A549 (cell line): ENCODE measurements at regions of chr17 and their contacts with region 1.

Region 1: DNA sequence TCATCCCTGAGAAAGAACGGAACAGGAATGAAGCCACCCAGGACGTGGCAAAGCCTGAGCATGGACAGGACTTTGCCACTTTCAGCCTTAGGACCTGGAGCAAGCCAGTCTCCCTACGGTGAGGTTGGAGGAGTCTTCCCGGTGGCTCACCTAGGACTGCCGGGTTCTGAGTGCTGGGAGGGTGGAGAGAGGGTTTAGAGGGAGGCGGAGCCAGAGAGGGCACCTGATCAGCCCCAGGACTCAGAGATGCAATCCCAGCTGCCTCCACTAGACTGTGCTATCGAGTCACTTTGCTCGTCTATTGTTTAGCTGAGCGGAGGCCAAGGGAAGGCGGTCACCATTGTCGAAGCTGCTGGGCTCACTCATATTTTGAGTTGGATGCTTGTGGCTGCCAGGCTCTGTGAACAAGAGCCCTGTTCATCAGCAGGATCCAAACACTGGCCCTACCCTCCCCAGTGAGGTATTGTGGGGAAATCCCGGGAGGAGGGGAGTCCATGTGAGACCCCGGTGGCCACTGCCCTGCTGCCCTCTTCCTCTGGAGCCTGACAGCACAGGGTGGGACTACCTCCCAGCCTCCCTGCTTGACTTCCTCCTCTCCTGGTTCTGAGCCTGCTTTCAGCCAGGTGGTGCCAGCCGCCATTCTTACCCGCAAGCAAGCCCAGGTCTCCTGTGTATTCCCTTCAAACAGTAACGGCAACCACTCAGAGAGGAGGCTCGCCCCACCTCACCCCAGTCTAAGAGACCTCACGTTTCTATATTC is 7.0 kb downstream of the KRT14 start:
- DNase-seq: peak; percentile 87 to 98
- ATAC-seq: peak; percentile 88 to 96
- H3K4me3 ChIP-seq: no peak overlapping the region; the same call in 2 of the 3 replicates
- H3K27ac ChIP-seq: peak overlapping the region; percentile 25 to 37; a peak in 3 of 6 replicates
- H3K4me1 ChIP-seq: peaks cover 6% of the 10 kb centered on the region
- CTCF ChIP-seq: peak; percentile 69
- EP300 ChIP-seq: no peak
- POLR2A ChIP-seq: no peak
- RAD21 ChIP-seq: peak; percentile 64 to 81

Region 2: GRCh38 chr17:41538565-41538991 is 41.1 kb before region 1 on chr17:
- CTCF ChIA-PET with region 1: no interaction called
- POLR2A ChIA-PET with region 1: no interaction called
- DNase-seq: no peak
- ATAC-seq: no peak
- H3K4me3 ChIP-seq: no peak overlapping the region
- H3K27ac ChIP-seq: peak overlapping the region in 1 of 2 experiments; percentile 40; a peak in 3 of 6 replicates
- H3K4me1 ChIP-seq: peaks cover 16% of the 10 kb centered on the region; the same call in 2 of the 3 replicates
- CTCF ChIP-seq: no peak
- EP300 ChIP-seq: no peak
- POLR2A ChIP-seq: no peak
- RAD21 ChIP-seq: no peak

Region 3: GRCh38 chr17:41567317-41567716 is 12.3 kb before region 1 on chr17:
- CTCF ChIA-PET with region 1: interaction called, 36 read pairs
- POLR2A ChIA-PET with region 1: no interaction called
- DNase-seq: no peak
- ATAC-seq: no peak
- H3K4me3 ChIP-seq: no peak overlapping the region
- H3K27ac ChIP-seq: no peak overlapping the region
- H3K4me1 ChIP-seq: no peaks in the 10 kb centered on the region
- CTCF ChIP-seq: no peak
- EP300 ChIP-seq: no peak
- POLR2A ChIP-seq: no peak
- RAD21 ChIP-seq: no peak

Region 4: DNA sequence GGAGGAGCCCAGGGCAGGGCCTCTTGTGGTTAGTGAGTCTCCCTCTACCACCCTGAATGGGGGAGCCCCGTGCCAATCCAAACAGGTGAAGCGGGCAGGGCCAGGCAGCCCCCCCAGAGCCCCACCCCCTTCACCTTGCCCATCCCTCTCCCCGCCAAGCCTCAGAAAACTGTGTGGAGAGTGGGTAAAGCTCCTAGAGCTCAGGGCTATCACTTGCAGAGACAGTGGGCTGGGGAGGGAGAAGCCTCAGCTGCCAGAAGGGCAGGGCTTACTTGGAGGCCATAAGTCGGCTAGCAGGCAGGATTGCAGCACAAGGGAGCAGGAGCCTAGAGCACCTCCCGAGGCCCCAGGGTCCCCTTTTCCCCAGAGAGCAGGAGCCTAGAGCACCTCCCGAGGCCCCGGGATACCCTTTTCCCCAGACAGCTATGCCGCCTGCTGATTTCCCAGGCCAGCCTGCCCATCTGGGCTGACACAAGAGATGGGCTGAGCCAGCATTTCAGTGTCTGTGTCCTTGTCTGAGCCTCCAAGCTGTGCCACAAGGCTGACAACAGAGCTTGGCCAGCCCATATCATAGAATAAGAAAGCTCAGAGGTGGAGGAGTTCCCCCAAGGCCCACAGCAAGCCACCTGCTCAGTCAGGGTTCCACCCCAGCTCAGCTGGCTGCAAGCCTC is 13.8 kb after region 1 on chr17:
- CTCF ChIA-PET with region 1: interaction called, 10 read pairs
- POLR2A ChIA-PET with region 1: no interaction called
- DNase-seq: no peak
- ATAC-seq: peak in 1 of 2 experiments; percentile 27; a peak in 2 of 6 replicates
- H3K4me3 ChIP-seq: no peak overlapping the region
- H3K27ac ChIP-seq: no peak overlapping the region
- H3K4me1 ChIP-seq: no peaks in the 10 kb centered on the region
- CTCF ChIP-seq: no peak
- EP300 ChIP-seq: no peak
- POLR2A ChIP-seq: no peak
- RAD21 ChIP-seq: no peak